ENCODE measurements at regions of chr3 and their contacts with region 1.

Region 1: DNA sequence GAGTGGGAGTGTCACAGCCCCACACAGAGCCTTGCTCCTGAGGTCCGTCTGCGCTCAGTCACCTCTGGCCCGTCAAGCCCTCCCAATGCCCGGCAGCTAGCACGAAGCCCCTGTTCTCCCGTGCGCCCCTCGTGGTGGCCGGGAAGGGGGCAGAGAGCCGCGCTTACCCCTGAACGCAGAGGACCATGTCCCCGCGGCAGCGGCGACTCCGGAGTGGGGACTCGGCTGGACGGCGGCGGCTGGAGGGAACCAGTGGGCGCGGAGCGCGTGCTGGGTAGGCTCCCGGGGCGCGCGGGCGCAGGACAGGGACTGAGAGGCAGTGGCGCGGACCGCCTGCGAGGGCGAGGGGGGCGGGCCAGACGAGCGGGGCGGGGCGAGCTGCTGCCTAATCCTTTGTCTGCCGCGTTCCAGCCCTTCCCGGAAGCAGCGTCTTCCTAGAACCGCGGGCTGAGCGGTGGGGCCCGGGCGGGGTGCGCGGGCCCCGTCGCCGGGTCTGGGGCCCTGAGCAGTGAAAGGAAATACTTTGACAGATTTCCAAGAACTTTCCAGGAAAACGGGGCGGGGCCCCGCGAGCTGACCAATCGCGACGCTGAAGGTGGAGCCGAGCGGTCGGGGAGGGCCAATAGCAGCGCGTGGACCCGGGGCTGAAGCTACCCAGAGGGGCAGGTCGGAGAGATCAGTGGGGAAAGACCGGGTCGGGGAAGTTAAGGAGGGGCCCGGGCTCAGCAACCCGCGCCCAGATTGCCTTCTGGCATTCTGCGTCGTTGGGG is at the start of gene CISH:
- H3K4me3 ChIP-seq: peak within 1 kb of the TSS; percentile 46
- H3K27ac ChIP-seq: peak within 1 kb of the TSS; percentile 67; the same call in 1 of the 2 replicates
- H3K4me1 ChIP-seq: 0 out of 2 replicates have a peak, but pooled peaks cover 2% of the 10 kb centered on the region
- CTCF ChIP-seq: peak; percentile 74

Region 2: DNA sequence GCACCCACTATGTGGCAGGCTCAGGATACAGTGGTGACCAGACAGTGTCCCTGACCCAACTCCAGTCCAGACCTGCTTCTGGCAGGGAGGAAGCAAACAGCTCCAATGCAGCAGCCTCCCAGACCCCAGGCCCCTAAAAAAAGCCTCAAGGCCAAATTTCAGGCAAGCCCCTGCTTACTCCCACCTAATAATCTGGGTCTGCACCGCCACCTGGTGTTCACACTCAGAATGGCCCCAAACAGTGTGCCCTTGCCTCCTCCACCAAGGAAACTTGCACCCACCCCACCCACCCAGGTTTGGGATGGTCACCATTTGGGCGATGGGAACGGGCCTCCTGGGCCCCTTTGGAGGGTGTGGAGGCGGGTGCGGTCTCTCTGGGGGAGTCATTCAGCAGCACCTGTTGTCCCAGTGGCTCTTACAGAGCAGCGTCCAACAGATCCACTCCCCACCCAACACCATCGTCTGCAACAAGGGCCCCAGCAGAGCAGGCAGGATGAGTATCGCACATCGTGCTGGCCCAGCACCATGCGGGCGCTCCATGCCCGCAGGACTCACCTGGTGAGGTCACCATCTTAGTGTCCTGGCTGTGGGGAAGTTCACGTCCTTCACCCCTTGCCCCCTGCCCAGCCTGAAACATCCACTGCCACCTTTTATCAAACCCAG is 61.4 kb before region 1 on chr3:
- CTCF ChIA-PET with region 1: interaction called, 10 read pairs
- POLR2A ChIA-PET with region 1: no interaction called
- H3K4me3 ChIP-seq: no peak overlapping the region
- H3K27ac ChIP-seq: no peak overlapping the region
- H3K4me1 ChIP-seq: no peaks in the 10 kb centered on the region
- CTCF ChIP-seq: no peak

Region 3: GRCh38 chr3:50627407-50628051 is 15.9 kb after region 1 on chr3:
- CTCF ChIA-PET with region 1: interaction called, 10 read pairs
- POLR2A ChIA-PET with region 1: interaction called, 3 read pairs
- H3K4me3 ChIP-seq: no peak overlapping the region
- H3K27ac ChIP-seq: no peak overlapping the region
- H3K4me1 ChIP-seq: peaks cover 2% of the 10 kb centered on the region
- CTCF ChIP-seq: peak; percentile 52; the same call in 1 of the 2 replicates

Region 4: GRCh38 chr3:51371943-51372557 is 760.4 kb after region 1 on chr3:
- CTCF ChIA-PET with region 1: interaction called, 20 read pairs
- POLR2A ChIA-PET with region 1: no interaction called
- H3K4me3 ChIP-seq: no peak overlapping the region
- H3K27ac ChIP-seq: no peak overlapping the region
- H3K4me1 ChIP-seq: no peaks in the 10 kb centered on the region
- CTCF ChIP-seq: peak; percentile 20; the same call in 1 of the 2 replicates

Region 5: DNA sequence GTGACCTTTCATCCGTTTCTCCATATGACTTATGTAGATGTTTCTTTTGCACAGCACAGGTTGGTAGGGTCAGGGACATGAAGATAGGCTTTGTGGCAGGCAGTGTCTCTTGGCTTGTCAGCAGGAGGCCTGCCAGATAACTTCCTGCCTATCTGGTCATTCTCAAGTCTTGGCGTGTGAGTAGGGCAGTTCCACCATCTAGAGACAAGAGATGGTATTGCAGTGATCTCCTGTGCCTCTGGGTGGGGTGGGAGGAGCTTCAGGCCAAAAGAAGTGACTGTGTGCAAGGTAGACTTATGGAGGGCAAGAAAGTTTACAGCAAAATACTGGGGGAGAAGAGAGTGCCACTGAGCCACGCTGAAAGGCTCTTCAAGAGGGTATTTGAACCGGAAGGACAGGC is 1070.4 kb after region 1 on chr3:
- CTCF ChIA-PET with region 1: interaction called, 10 read pairs
- POLR2A ChIA-PET with region 1: no interaction called
- H3K4me3 ChIP-seq: no peak overlapping the region
- H3K27ac ChIP-seq: no peak overlapping the region
- H3K4me1 ChIP-seq: no peaks in the 10 kb centered on the region
- CTCF ChIP-seq: 0 out of 2 replicates have a peak, but pooled peaks have one; percentile 58

Measured in HEK293 (cell line).